ENCODE measurements at regions of chr20 and their contacts with region 1.

Region 1: GRCh38 chr20:5046656-5047339 is 45.5 kb upstream of the SLC23A2 start:
- DNase-seq: no peak
- ATAC-seq: no peak
- H3K4me3 ChIP-seq: no peak overlapping the region
- H3K27ac ChIP-seq: no peak overlapping the region
- H3K4me1 ChIP-seq: no peaks in the 10 kb centered on the region
- H3K27me3 ChIP-seq: no peaks in the 10 kb centered on the region
- CTCF ChIP-seq: no peak

Region 2: DNA sequence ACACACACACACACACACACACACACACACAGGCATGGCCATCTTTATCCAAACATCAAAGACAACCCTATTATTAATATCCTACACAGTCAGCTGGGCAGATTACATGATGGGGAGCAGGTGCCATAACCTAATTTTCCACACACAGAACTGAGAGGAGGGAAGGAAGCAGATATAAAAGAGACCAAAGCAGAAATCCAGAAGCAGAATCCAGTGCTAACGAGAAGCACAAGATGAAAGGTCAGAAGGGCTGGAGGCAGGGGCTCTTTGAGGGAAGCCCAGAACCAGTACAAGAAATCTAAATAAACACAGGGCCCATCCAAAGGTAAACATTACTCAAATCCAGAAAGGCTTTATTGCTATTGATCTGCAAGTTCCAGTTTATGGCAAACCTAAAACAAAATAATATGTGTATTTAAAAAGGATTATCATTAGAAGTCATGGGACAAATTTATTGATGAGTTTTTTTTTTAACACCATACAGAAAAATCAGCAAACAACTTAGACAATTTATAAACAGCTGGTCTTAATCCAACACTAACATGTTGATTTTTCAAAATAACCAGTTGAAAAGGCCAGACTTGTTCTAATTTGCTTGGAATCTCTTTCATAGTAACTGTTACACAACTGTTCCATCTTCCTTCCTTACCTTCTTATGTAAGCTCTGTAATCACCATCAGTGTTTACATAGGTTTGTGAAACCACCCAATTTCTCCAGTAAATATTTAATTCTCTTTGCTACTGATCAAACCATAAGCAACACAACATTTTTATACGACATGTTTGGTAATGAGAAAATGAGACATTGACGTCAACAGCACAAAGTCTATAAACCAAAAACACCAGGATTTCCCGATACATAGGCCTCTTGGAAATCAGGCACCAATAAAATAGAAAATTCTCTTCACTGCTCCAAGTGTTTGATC is 79.7 kb before region 1 on chr20:
- CTCF ChIA-PET with region 1: no interaction called
- POLR2A ChIA-PET with region 1: no interaction called
- intact Hi-C with region 1: no loop called
- DNase-seq: no peak
- ATAC-seq: no peak
- H3K4me3 ChIP-seq: no peak overlapping the region
- H3K27ac ChIP-seq: no peak overlapping the region
- H3K4me1 ChIP-seq: no peaks in the 10 kb centered on the region
- H3K27me3 ChIP-seq: no peaks in the 10 kb centered on the region
- CTCF ChIP-seq: no peak

Region 3: GRCh38 chr20:5056801-5057599 is 10.2 kb after region 1 on chr20:
- CTCF ChIA-PET with region 1: interaction called, 12 read pairs
- POLR2A ChIA-PET with region 1: interaction called, 3 read pairs
- intact Hi-C with region 1: no loop called
- DNase-seq: peak; percentile 71
- ATAC-seq: peak; percentile 44
- H3K4me3 ChIP-seq: no peak overlapping the region
- H3K27ac ChIP-seq: no peak overlapping the region
- H3K4me1 ChIP-seq: peaks cover 16% of the 10 kb centered on the region
- H3K27me3 ChIP-seq: no peaks in the 10 kb centered on the region
- CTCF ChIP-seq: peak; percentile 76